HepG2 (cell line): ENCODE measurements at regions of chr1 and their contacts with region 1.

Region 1: DNA sequence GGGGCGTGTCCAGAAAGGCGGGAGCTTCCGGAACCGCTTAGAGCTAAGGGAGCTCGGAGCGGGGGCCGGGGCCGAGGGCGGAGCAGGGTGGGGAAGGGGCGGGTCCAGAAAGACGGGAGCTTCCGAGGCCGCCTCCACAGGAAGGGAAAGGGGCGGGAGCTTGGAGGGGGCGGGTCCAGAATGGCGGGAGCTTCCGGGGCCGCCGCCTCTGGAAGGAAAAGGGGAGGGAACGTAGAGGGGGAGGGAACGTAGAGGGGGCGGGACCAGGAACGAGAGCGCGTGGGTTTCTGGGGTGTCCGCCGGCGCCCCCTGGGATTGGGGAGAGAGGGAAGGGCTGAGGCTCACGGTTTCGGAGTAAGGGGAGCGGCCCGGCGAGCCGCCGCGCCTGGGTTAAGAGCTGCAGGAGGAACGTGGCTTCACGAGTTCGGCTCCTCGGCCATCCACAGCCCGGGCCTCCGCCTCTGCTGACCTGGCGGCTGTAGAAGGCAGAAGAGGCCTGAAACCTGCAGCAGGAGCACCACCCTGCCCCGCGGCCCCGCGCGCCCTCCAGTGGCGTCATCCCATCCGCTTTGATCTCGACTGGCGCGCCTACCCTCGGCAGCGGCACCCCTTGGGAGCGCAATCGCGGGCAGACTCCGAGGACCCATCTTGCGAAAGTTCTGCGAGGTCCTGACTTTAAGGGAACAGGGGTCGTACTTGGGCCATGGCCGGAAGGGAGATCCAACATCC is 22.9 kb upstream of the HPDL start:
- DNase-seq: peak; percentile 92
- ATAC-seq: peak; percentile 87
- H3K4me3 ChIP-seq: peak overlapping the region; percentile 73 to 77 (median 75)
- H3K27ac ChIP-seq: peak overlapping the region; percentile 90
- H3K4me1 ChIP-seq: peaks cover 54% of the 10 kb centered on the region
- H3K27me3 ChIP-seq: no peaks in the 10 kb centered on the region
- CTCF ChIP-seq: peak; percentile 98
- EP300 ChIP-seq: peak in 1 of 2 experiments; percentile 1; a peak in 1 of 4 replicates
- POLR2A ChIP-seq: peak; percentile 81 to 94
- RAD21 ChIP-seq: peak; percentile 97

Region 2: GRCh38 chr1:44826375-44827196 is 477.2 kb before region 1 on chr1:
- CTCF ChIA-PET with region 1: no interaction called
- POLR2A ChIA-PET with region 1: interaction called, 16 read pairs
- in situ Hi-C with region 1: loop called (anchors 10 kb)
- intact Hi-C with region 1: loop called (anchors 10 kb)
- DNase-seq: peak; percentile 75
- ATAC-seq: peak; percentile 87
- H3K4me3 ChIP-seq: peak overlapping the region; percentile 37 to 71 (median 54)
- H3K27ac ChIP-seq: peak overlapping the region; percentile 88
- H3K4me1 ChIP-seq: peaks cover 54% of the 10 kb centered on the region
- H3K27me3 ChIP-seq: peaks cover 0 to 2% of the 10 kb centered on the region in 2 experiments; a peak in 1 of 5 replicates
- CTCF ChIP-seq: no peak; the same call in 1 of the 2 replicates
- EP300 ChIP-seq: 0 out of 4 replicates have a peak, but pooled peaks of 1 of the 2 experiments have one; percentile 19
- POLR2A ChIP-seq: peak in 1 of 2 experiments; percentile 65; a peak in 2 of 4 replicates
- RAD21 ChIP-seq: peak; percentile 22; the same call in 1 of the 2 replicates

Region 3: GRCh38 chr1:45018599-45019230 is 285.0 kb before region 1 on chr1:
- CTCF ChIA-PET with region 1: interaction called, 24 read pairs
- POLR2A ChIA-PET with region 1: interaction called, 231 read pairs
- in situ Hi-C with region 1: loop called (anchors 5 kb)
- intact Hi-C with region 1: loop called (anchors 1 kb)
- DNase-seq: peak; percentile 47
- ATAC-seq: peak; percentile 91
- H3K4me3 ChIP-seq: no peak overlapping the region
- H3K27ac ChIP-seq: no peak overlapping the region
- H3K4me1 ChIP-seq: peaks cover 12% of the 10 kb centered on the region
- H3K27me3 ChIP-seq: no peaks in the 10 kb centered on the region
- CTCF ChIP-seq: peak; percentile 86
- EP300 ChIP-seq: no peak
- POLR2A ChIP-seq: no peak
- RAD21 ChIP-seq: peak; percentile 87

Region 4: DNA sequence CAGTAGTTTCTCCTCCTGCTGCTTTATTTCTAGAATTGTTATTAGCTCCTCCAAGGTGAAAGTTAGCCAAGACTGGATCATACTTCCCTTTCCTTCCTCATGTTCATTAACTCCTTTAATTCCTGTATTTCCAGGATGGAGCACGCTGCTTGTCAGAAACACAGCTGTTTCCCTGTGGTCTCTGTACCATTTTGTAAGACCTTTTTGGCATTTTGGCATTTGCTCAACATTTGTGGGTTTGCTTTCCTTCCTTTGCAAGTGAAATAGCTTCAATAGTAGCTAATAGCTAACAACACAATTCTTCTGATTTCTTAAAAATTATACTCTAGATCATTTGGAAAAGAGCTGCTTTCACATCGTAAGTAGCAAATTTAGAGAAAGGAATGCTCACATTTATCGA is 21.4 kb before region 1 on chr1:
- CTCF ChIA-PET with region 1: no interaction called
- POLR2A ChIA-PET with region 1: interaction called, 10 read pairs
- in situ Hi-C with region 1: no loop called
- intact Hi-C with region 1: no loop called
- DNase-seq: no peak
- ATAC-seq: no peak
- H3K4me3 ChIP-seq: no peak overlapping the region
- H3K27ac ChIP-seq: no peak overlapping the region
- H3K4me1 ChIP-seq: peaks cover 10% of the 10 kb centered on the region
- H3K27me3 ChIP-seq: no peaks in the 10 kb centered on the region
- CTCF ChIP-seq: no peak
- EP300 ChIP-seq: no peak
- POLR2A ChIP-seq: no peak
- RAD21 ChIP-seq: no peak

Region 5: GRCh38 chr1:45490626-45491486 is 187.1 kb after region 1 on chr1 and contains the start of gene TESK2:
- CTCF ChIA-PET with region 1: interaction called, 4 read pairs
- POLR2A ChIA-PET with region 1: interaction called, 14 read pairs
- in situ Hi-C with region 1: loop called (anchors 5 kb)
- intact Hi-C with region 1: loop called (anchors 1 kb)
- DNase-seq: peak; percentile 100
- ATAC-seq: peak; percentile 93
- H3K4me3 ChIP-seq: peak within 1 kb of the TSS; percentile 90 to 98 (median 93)
- H3K27ac ChIP-seq: peak within 1 kb of the TSS; percentile 78
- H3K4me1 ChIP-seq: peaks cover 29% of the 10 kb centered on the region
- H3K27me3 ChIP-seq: no peaks in the 10 kb centered on the region; a peak in 1 of 5 replicates
- CTCF ChIP-seq: no peak; the same call in 1 of the 2 replicates
- EP300 ChIP-seq: no peak
- POLR2A ChIP-seq: peak; percentile 90
- RAD21 ChIP-seq: peak; percentile 42; the same call in 1 of the 2 replicates
- total RNA-seq, gene TESK2: 5.5 and 6.9 TPM in 2 replicates